B cell (primary cell): ENCODE measurements at regions of chr2 and their contacts with region 1.

Region 1: DNA sequence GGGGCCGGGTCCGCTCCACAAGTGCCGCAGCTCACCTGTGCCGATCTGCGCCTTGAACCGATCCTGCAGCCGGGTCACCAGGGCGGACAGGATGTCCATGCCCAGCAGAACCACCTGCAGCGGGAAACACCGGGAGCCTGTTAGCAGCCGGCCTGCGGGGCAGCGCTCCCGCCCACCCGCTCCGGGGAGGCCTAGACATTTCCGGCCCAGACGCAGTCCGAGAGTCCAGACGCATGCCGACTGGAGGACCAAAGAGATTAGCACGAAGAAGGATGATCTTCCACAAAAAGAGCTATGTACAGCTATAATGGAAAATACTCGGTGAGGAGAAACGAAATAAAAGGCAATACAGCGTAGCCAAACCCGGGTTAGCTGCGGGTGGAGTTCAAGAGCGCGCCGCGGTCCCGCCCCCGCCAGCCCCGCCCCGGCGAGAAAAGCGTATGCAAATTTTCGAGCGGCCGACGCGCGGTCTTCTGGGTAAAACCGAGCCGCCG is 421 bp upstream of the RNU4ATAC start:
- DNase-seq: no peak
- ATAC-seq: peak; percentile 72
- H3K4me3 ChIP-seq: peak overlapping the region; percentile 75 to 94 (median 85)
- H3K4me3 Mint-ChIP-seq: peak overlapping the region; percentile 92
- H3K27ac ChIP-seq: peak overlapping the region; percentile 100
- H3K27ac Mint-ChIP-seq: peak overlapping the region; percentile 97
- H3K4me1 ChIP-seq: peaks cover 8 to 13% of the 10 kb centered on the region in 2 donors
- H3K4me1 Mint-ChIP-seq: peaks cover 42% of the 10 kb centered on the region
- H3K27me3 ChIP-seq: no peaks in the 10 kb centered on the region
- H3K27me3 Mint-ChIP-seq: no peaks in the 10 kb centered on the region
- CTCF ChIP-seq: no peak

Region 2: DNA sequence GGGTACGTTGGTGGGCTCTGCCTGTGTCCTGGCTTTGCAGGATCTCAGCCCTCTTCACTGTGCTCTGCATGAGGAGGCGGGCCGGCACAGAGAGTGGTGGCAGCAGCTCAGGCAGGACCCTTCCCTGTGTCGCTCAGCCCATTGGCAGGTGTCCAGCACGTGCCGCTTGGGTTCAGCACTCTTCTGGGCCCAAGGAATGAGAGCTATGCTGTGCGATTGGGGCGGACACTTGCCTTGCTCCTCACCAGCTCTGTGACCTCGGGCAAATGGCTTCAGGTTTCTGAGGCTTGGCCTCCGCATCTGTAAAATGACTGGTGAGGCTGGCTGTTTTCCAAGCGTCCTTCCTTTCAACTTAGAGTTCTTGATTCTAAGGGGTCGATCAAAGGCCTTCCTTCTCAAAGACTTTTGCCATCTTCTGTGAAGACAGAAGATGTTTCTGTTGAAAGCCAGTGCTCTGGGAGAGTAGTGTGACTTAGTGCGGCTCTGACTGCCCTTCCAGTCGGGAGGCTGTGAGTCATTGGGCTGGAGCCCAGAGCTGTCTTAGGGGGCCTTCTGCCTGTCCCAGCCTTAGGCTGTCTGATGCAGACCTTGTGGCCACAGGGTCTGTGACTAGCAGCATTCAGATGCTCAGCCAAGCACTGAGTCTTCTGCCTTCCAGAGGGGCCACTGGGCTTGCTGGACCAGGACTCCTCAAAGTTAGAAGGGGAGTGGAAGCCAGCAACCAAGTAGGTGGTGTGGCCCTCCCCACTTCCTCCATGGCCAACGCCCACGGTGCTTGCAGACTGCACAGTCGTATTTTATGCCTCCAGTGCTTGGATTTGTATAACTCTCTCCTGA is 758.9 kb before region 1 on chr2:
- CTCF ChIA-PET with region 1: no interaction called
- POLR2A ChIA-PET with region 1: no interaction called
- intact Hi-C with region 1: no loop called
- DNase-seq: no peak
- ATAC-seq: no peak
- H3K4me3 ChIP-seq: no peak overlapping the region
- H3K4me3 Mint-ChIP-seq: no peak overlapping the region
- H3K27ac ChIP-seq: no peak overlapping the region
- H3K27ac Mint-ChIP-seq: no peak overlapping the region
- H3K4me1 ChIP-seq: no peaks in the 10 kb centered on the region
- H3K4me1 Mint-ChIP-seq: no peaks in the 10 kb centered on the region
- H3K27me3 ChIP-seq: no peaks in the 10 kb centered on the region
- H3K27me3 Mint-ChIP-seq: no peaks in the 10 kb centered on the region
- CTCF ChIP-seq: no peak

Region 3: GRCh38 chr2:121596221-121597080 is 66.2 kb after region 1 on chr2:
- CTCF ChIA-PET with region 1: no interaction called
- POLR2A ChIA-PET with region 1: no interaction called
- intact Hi-C with region 1: loop called (anchors 1 kb)
- DNase-seq: peak; percentile 77
- ATAC-seq: peak; percentile 93
- H3K4me3 ChIP-seq: peak overlapping the region in 3 of 5 experiments; percentile 10 to 34 (median 18)
- H3K4me3 Mint-ChIP-seq: peak overlapping the region; percentile 70
- H3K27ac ChIP-seq: peak overlapping the region; percentile 46 to 84
- H3K27ac Mint-ChIP-seq: peak overlapping the region; percentile 78
- H3K4me1 ChIP-seq: peaks cover 17 to 21% of the 10 kb centered on the region in 2 donors
- H3K4me1 Mint-ChIP-seq: peaks cover 53% of the 10 kb centered on the region
- H3K27me3 ChIP-seq: no peaks in the 10 kb centered on the region
- H3K27me3 Mint-ChIP-seq: no peaks in the 10 kb centered on the region
- CTCF ChIP-seq: no peak

Region 4: DNA sequence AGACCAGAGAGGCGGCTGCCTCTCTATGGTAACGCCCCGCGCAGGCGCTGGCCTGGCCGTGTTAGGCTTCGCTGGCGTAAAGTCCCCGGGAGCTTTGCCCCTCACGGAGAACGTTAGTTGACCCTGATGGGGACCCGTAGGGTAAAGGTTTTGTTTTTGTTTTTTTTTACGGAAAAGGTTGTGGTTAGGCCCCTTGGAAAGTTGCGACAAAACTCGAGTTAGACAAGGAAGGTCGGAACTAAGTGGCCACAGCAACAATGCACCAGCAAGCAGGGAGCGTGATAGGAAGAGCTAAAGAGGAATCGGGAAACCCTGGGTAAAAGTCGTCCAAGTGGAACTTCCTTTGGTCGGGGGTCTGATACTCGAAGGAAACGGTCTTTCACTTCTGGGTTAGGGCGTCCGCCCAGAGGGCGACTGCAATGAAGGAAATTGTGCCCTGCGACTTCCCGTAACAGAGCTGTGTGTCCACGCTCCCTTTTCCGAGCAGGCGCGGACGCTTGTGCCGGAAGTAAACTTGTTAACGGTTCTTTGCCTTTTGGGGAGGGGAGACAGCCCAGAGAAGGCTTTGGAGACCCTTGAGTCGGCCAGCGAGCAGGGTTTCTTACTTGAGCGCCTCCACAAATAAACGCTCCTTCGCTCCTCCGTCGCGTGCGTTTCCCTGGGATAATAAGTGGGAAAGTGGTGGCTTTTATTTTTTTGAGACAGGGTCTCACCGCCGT is 119.5 kb after region 1 on chr2:
- CTCF ChIA-PET with region 1: interaction called, 23 read pairs
- POLR2A ChIA-PET with region 1: interaction called, 57 read pairs
- intact Hi-C with region 1: loop called (anchors 1 kb)
- DNase-seq: peak; percentile 98
- ATAC-seq: peak; percentile 93
- H3K4me3 ChIP-seq: peak overlapping the region; percentile 87 to 99 (median 95)
- H3K4me3 Mint-ChIP-seq: peak overlapping the region; percentile 95
- H3K27ac ChIP-seq: peak overlapping the region; percentile 82 to 98
- H3K27ac Mint-ChIP-seq: peak overlapping the region; percentile 98
- H3K4me1 ChIP-seq: peaks cover 21 to 24% of the 10 kb centered on the region in 2 donors
- H3K4me1 Mint-ChIP-seq: peaks cover 50% of the 10 kb centered on the region
- H3K27me3 ChIP-seq: no peaks in the 10 kb centered on the region
- H3K27me3 Mint-ChIP-seq: no peaks in the 10 kb centered on the region
- CTCF ChIP-seq: no peak

Region 5: DNA sequence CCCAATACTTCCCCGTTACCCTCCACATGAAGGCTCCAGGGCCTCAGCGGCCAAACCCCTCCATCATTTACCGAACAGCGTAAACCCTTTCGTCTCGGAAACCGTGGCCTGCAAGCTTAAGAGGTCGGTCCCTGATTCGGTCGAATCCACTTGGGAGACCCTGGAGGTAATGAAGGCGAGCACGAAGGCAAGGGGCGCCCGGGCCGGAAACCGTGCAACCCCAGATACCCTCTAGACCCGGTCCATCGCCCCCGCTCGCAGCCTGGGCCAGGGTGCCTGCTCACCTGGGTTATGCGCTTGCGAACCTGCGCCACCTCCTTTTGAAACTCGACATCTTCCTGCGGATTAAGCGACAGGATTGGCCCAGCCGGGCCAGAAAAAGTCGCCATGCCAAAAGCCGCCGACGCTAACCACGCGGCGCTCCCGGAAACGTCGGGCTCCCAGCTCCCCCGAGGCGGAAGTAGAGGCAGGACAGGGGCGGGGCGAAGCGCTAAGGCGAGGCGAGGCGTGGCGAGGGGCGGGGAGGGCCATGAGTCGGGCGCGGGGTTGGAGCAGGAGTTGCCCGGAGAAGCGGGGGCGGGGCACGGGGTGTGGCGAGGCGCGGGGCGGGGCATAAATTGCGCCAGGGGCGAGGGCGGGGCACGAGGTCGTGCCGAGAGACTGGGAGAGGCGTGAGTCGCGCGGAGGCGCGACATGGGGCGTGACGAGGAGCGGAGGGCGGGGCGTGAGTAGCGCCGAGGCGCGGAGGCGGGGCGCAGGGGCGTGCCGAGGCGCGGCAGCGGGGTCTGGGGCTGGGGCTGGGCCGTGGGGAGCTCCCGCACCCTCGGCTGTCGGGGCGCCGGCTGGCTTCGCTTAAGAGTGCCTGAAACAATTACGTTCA is 206.4 kb after region 1 on chr2 and contains the start of gene NIFK:
- CTCF ChIA-PET with region 1: interaction called, 5 read pairs
- POLR2A ChIA-PET with region 1: interaction called, 23 read pairs
- intact Hi-C with region 1: loop called (anchors 1 kb)
- DNase-seq: peak; percentile 99
- ATAC-seq: peak; percentile 95
- H3K4me3 ChIP-seq: peak within 1 kb of the TSS; percentile 84 to 99 (median 98)
- H3K4me3 Mint-ChIP-seq: peak within 1 kb of the TSS; percentile 97
- H3K27ac ChIP-seq: peak within 1 kb of the TSS; percentile 59 to 92
- H3K27ac Mint-ChIP-seq: peak within 1 kb of the TSS; percentile 93
- H3K4me1 ChIP-seq: peaks cover 14 to 20% of the 10 kb centered on the region in 2 donors
- H3K4me1 Mint-ChIP-seq: peaks cover 19% of the 10 kb centered on the region
- H3K27me3 ChIP-seq: no peaks in the 10 kb centered on the region
- H3K27me3 Mint-ChIP-seq: no peaks in the 10 kb centered on the region
- CTCF ChIP-seq: no peak
- total RNA-seq, gene NIFK: 55.3 and 56.3 TPM in 2 replicates